Activated CD4-positive, alpha-beta T cell treated with anti-CD3 and anti-CD28 coated beads, Interleukin-2, amount 10 ng/mL, durations not matched to agents 24 days and 14 days (primary cell): ENCODE measurements at regions of chrX and their contacts with region 1.

Region 1: GRCh38 chrX:43557792-43558191 is 98.3 kb upstream of the MAOA start:
- DNase-seq: peak; percentile 81
- H3K4me3 Mint-ChIP-seq: no peak overlapping the region
- H3K27ac Mint-ChIP-seq: no peak overlapping the region
- H3K4me1 Mint-ChIP-seq: no peaks in the 10 kb centered on the region
- H3K27me3 Mint-ChIP-seq: no peaks in the 10 kb centered on the region

Region 2: DNA sequence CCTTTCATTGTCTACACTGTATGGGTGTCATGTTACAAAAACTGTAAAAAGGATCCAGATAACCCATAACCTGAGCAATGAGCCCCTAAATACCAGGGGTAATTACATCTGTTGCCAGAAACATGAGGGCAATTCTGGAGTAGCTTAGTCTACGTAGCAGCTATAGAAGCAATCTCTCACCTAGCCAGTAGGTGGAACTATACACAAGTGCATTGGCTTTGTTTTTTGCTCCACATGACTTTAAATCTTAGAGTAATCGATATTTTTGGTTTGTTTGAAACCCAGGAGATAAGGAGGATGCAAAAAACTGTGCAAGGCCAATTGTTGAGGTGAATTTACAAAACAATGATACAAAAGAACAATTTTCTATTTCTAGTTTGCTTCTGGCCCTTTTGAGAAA is 1776.3 kb before region 1 on chrX:
- intact Hi-C with region 1: loop called (anchors 5 kb)
- DNase-seq: peak; percentile 61
- H3K4me3 Mint-ChIP-seq: no peak overlapping the region
- H3K27ac Mint-ChIP-seq: no peak overlapping the region
- H3K4me1 Mint-ChIP-seq: no peaks in the 10 kb centered on the region
- H3K27me3 Mint-ChIP-seq: no peaks in the 10 kb centered on the region

Region 3: GRCh38 chrX:41796577-41796976 is 1761.2 kb before region 1 on chrX:
- intact Hi-C with region 1: loop called (anchors 5 kb)
- DNase-seq: no peak
- H3K4me3 Mint-ChIP-seq: no peak overlapping the region
- H3K27ac Mint-ChIP-seq: no peak overlapping the region
- H3K4me1 Mint-ChIP-seq: peaks cover 16% of the 10 kb centered on the region
- H3K27me3 Mint-ChIP-seq: no peaks in the 10 kb centered on the region

Region 4: GRCh38 chrX:43141885-43142284 is 415.9 kb before region 1 on chrX:
- intact Hi-C with region 1: no loop called
- DNase-seq: no peak
- H3K4me3 Mint-ChIP-seq: no peak overlapping the region
- H3K27ac Mint-ChIP-seq: no peak overlapping the region
- H3K4me1 Mint-ChIP-seq: no peaks in the 10 kb centered on the region
- H3K27me3 Mint-ChIP-seq: no peaks in the 10 kb centered on the region

Region 5: GRCh38 chrX:43750248-43750676 is 192.5 kb after region 1 on chrX:
- intact Hi-C with region 1: loop called (anchors 2 kb)
- DNase-seq: peak; percentile 74
- H3K4me3 Mint-ChIP-seq: no peak overlapping the region
- H3K27ac Mint-ChIP-seq: no peak overlapping the region
- H3K4me1 Mint-ChIP-seq: peaks cover 2% of the 10 kb centered on the region
- H3K27me3 Mint-ChIP-seq: no peaks in the 10 kb centered on the region